Esophagus muscularis mucosa (tissue), 4 donors: ENCODE measurements at regions of chr4 and their contacts with region 1.

Region 1: DNA sequence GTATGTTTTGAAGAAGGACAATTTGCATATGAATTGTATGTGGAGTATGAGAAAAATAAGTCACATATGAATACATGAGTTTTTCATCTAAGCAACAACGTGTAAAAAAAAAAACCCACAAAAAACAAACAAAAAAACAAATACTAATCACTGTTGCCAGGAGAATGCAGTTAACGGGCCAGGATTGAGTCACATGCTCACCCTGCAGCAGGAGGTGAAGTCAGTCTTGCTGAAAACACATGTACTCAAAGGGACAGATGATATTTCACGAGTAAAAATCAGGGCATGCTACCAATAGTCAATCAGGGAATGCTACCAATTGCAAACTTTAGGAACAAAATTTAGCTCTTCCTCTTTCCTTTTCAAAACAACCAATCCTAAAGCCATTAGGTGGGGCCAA is 10.4 kb upstream of the DCLK2 start:
- DNase-seq: no peak
- H3K4me3 ChIP-seq: no peak overlapping the region
- H3K27ac ChIP-seq: no peak overlapping the region
- H3K4me1 ChIP-seq: peaks cover 5 to 21% (median 14%) of the 10 kb centered on the region in 4 donors
- H3K27me3 ChIP-seq: no peaks in the 10 kb centered on the region
- CTCF ChIP-seq: no peak
- EP300 ChIP-seq: no peak
- POLR2A ChIP-seq: no peak

Region 2: GRCh38 chr4:149065753-149066152 is 1002.1 kb before region 1 on chr4:
- intact Hi-C with region 1: no loop called
- DNase-seq: no peak
- H3K4me3 ChIP-seq: no peak overlapping the region
- H3K27ac ChIP-seq: no peak overlapping the region
- H3K4me1 ChIP-seq: no peaks in the 10 kb centered on the region
- H3K27me3 ChIP-seq: no peaks in the 10 kb centered on the region
- CTCF ChIP-seq: no peak
- EP300 ChIP-seq: no peak
- POLR2A ChIP-seq: no peak

Region 3: GRCh38 chr4:149735796-149736195 is 332.1 kb before region 1 on chr4:
- intact Hi-C with region 1: no loop called
- DNase-seq: no peak
- H3K4me3 ChIP-seq: no peak overlapping the region
- H3K27ac ChIP-seq: no peak overlapping the region
- H3K4me1 ChIP-seq: no peaks in the 10 kb centered on the region
- H3K27me3 ChIP-seq: no peaks in the 10 kb centered on the region
- CTCF ChIP-seq: no peak
- EP300 ChIP-seq: no peak
- POLR2A ChIP-seq: no peak

Region 4: GRCh38 chr4:150018257-150018656 is 49.6 kb before region 1 on chr4:
- intact Hi-C with region 1: loop called (anchors 5 kb)
- DNase-seq: no peak
- H3K4me3 ChIP-seq: no peak overlapping the region
- H3K27ac ChIP-seq: no peak overlapping the region
- H3K4me1 ChIP-seq: no peaks in the 10 kb centered on the region
- H3K27me3 ChIP-seq: no peaks in the 10 kb centered on the region
- CTCF ChIP-seq: no peak
- EP300 ChIP-seq: no peak
- POLR2A ChIP-seq: no peak